Right ventricle myocardium inferior (tissue), 1 donor: ENCODE measurements at regions of chr19 and their contacts with region 1.

Region 1: GRCh38 chr19:8459520-8460259 is 14.9 kb downstream of the HNRNPM start:
- DNase-seq: no peak
- ATAC-seq: peak; percentile 50

Region 2: GRCh38 chr19:8473648-8474476 is 14.2 kb after region 1 on chr19:
- intact Hi-C with region 1: loop called (anchors 1 kb)
- DNase-seq: no peak
- ATAC-seq: no peak

Region 3: GRCh38 chr19:8505680-8506401 is 46.2 kb after region 1 on chr19:
- intact Hi-C with region 1: loop called (anchors 5 kb)
- DNase-seq: peak; percentile 93
- ATAC-seq: peak; percentile 86

Region 4: DNA sequence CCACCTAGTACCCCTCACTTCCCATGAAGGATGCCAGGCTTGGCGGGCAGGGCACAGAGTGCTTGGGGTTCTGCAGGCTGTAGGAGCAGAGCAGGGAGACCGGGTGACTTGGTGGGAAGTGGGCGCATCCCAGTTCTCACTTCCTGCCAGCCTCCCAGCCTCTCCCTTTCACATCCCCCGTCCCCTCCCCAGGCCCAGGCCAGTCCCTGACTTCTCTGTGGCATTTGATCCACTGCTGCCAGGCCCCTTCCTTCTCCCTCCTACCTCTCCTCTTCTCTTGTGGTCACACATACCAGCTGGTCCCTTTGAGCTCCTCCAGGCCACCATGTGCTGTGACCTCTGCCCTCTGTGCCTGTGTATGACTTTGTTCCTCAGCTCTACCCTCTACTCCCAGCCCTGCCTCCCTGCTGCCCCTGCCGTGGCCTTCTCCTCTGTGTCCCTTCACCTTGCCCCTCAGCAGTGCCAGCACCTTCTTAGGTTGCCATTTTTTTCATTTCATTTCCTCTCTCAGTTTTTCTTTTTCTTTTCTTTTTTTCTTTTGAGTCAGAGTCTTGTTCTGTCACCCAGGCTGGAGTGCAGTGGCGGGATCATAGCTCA is 98.0 kb after region 1 on chr19:
- intact Hi-C with region 1: no loop called
- DNase-seq: peak; percentile 62
- ATAC-seq: peak; percentile 20